PC-3 (cell line): ENCODE measurements at regions of chr16 and their contacts with region 1.

Region 1: DNA sequence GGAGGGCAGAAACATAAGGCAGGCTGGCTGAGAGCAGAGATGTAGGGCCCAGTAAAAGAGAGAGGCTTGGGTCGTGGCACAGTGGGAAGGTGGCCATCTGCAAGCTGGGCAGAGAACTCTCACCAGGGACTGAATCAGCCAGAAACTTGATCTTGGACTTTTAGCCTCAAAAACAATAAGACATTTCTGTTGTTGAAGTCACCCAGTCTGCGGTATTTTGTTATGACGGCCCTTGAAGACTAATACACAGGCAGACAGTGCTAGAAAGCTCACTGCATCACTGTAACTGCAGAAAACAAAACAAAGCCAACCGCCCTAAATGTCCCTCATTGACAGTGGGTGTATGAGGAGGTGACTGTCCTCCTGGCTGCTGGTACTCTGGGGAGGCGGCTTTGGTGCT is 3.9 kb upstream of the JPH3 start:
- DNase-seq: no peak
- ATAC-seq: no peak
- H3K4me3 ChIP-seq: no peak overlapping the region
- H3K27ac ChIP-seq: no peak overlapping the region
- H3K4me1 ChIP-seq: no peaks in the 10 kb centered on the region
- H3K27me3 ChIP-seq: peaks cover 60% of the 10 kb centered on the region
- CTCF ChIP-seq: no peak

Region 2: DNA sequence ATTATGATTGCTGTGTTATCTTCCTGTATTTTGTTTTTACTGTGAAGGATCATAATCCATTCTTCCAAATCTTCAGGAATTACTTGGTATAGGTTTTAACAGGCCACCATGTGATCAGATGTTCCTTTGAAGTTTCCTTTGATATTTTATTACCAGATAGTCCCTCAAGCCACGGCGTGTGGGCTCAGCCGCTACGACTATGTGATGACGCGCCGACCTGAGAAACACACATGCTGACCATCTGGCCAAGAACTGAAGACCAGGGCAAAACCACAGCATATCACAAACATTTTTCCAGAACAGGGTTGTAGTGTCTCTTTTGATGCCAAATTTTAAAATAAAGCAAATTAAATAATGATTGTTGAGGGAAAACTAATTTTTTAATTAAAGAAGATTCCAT is 152.9 kb before region 1 on chr16:
- CTCF ChIA-PET with region 1: no interaction called
- POLR2A ChIA-PET with region 1: interaction called, 22 read pairs
- intact Hi-C with region 1: no loop called
- DNase-seq: no peak
- ATAC-seq: no peak
- H3K4me3 ChIP-seq: no peak overlapping the region
- H3K27ac ChIP-seq: no peak overlapping the region
- H3K4me1 ChIP-seq: peaks cover 8% of the 10 kb centered on the region; the same call in 1 of the 2 replicates
- H3K27me3 ChIP-seq: no peaks in the 10 kb centered on the region
- CTCF ChIP-seq: no peak

Region 3: DNA sequence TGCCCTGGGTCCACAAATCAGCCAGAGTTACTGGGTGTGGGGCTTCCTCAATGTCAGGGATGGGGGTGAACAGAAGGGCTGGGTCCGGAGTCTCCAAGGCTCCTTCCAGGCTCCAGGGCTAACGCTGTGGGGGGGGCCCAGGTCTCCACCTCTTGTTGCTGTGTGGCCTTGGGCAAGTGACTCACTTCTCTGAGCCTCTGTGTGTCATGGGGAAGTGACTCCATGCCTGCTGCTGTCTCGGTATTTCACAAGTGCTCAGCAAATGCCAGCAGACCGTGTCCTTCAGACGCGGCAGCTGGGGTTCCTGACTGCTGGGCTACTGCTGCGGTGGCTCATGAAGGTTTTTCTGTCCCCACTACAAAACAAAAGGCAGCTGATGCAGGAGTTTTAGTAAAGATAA is 30.5 kb after region 1 on chr16:
- CTCF ChIA-PET with region 1: no interaction called
- POLR2A ChIA-PET with region 1: no interaction called
- intact Hi-C with region 1: no loop called
- DNase-seq: peak; percentile 69
- ATAC-seq: peak; percentile 48
- H3K4me3 ChIP-seq: no peak overlapping the region
- H3K27ac ChIP-seq: no peak overlapping the region
- H3K4me1 ChIP-seq: 0 out of 2 replicates have a peak, but pooled peaks cover 4% of the 10 kb centered on the region
- H3K27me3 ChIP-seq: peaks cover 8% of the 10 kb centered on the region; the same call in 1 of the 2 replicates
- CTCF ChIP-seq: no peak

Region 4: GRCh38 chr16:87982491-87983415 is 384.3 kb after region 1 on chr16:
- CTCF ChIA-PET with region 1: no interaction called
- POLR2A ChIA-PET with region 1: no interaction called
- intact Hi-C with region 1: no loop called
- DNase-seq: no peak
- ATAC-seq: no peak
- H3K4me3 ChIP-seq: no peak overlapping the region
- H3K27ac ChIP-seq: 0 out of 2 replicates have a peak overlapping the region, but pooled peaks have one; percentile 13
- H3K4me1 ChIP-seq: no peaks in the 10 kb centered on the region
- H3K27me3 ChIP-seq: no peaks in the 10 kb centered on the region
- CTCF ChIP-seq: no peak